Left lung (tissue), 14 donors: ENCODE measurements at regions of chr7 and their contacts with region 1.

Region 1: GRCh38 chr7:116671681-116672595 is at the start of gene MET:
- DNase-seq: peak; percentile 69 to 91 (median 84)
- ATAC-seq: peak; percentile 91
- H3K4me3 ChIP-seq: peak within 1 kb of the TSS; percentile 42 to 49
- H3K27ac ChIP-seq: peak within 1 kb of the TSS; percentile 67 to 77
- H3K4me1 ChIP-seq: peaks cover 0 to 9% of the 10 kb centered on the region in 2 donors
- H3K27me3 ChIP-seq: peaks cover 0 to 47% of the 10 kb centered on the region in 2 donors
- CTCF ChIP-seq: peak; percentile 37 to 56
- polyA plus RNA-seq, gene MET: 24.7 to 35.6 (median 29.0) TPM

Region 2: GRCh38 chr7:116741625-116742316 is 69.8 kb after region 1 on chr7:
- intact Hi-C with region 1: no loop called
- DNase-seq: no peak
- ATAC-seq: peak; percentile 6
- H3K4me3 ChIP-seq: no peak overlapping the region
- H3K27ac ChIP-seq: no peak overlapping the region
- H3K4me1 ChIP-seq: no peaks in the 10 kb centered on the region
- H3K27me3 ChIP-seq: no peaks in the 10 kb centered on the region
- CTCF ChIP-seq: no peak

Region 3: DNA sequence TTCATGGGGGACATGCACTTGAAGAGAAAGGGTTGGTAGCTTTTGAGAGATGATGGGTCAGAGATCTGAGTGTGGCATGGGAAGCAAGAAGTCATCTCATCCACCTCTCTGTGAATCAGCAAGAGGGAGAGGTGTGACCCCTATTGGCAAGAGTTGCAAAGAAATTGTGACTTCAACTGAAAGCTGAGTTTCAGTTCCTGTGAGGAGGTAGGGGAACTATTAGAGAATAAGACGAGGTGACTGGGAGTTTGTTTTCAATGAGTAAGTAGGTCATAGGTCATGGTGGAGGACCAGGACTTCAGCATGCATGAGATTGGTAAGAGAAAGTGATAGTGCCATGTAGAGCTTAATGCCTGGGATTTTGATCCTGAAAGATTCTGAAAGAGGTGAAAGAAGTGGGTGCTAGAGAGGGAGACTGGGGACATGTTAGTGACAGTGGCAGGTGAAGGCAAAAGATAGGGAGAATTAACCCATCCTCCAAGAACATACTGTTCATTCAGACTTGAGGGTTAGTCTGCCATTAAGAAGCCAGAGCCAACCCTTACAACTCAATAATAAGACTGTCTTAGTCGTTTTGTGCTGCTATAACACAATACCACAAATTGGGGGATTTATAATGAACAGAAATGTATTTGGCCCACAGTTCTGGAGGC is 115.0 kb after region 1 on chr7:
- intact Hi-C with region 1: loop called in 1 of 2 experiments (anchors 10 kb)
- DNase-seq: no peak
- ATAC-seq: peak; percentile 49
- H3K4me3 ChIP-seq: no peak overlapping the region
- H3K27ac ChIP-seq: no peak overlapping the region
- H3K4me1 ChIP-seq: peaks cover 0 to 7% of the 10 kb centered on the region in 2 donors
- H3K27me3 ChIP-seq: no peaks in the 10 kb centered on the region
- CTCF ChIP-seq: no peak

Region 4: GRCh38 chr7:117034851-117035464 is 363.0 kb after region 1 on chr7:
- intact Hi-C with region 1: no loop called
- DNase-seq: peak in 2 of 4 donors; percentile 66 to 77
- ATAC-seq: peak; percentile 60
- H3K4me3 ChIP-seq: no peak overlapping the region
- H3K27ac ChIP-seq: no peak overlapping the region
- H3K4me1 ChIP-seq: peaks cover 6 to 7% of the 10 kb centered on the region in 2 donors
- H3K27me3 ChIP-seq: no peaks in the 10 kb centered on the region
- CTCF ChIP-seq: no peak